Activated T-helper 1 cell treated with anti-CD3 and anti-CD28 coated beads, Interleukin-12 subunit alpha, Interleukin-12 subunit beta, Interleukin-2, Interleukin-4 antibody, amounts not matched to agents 30 ng/mL and 10 ng/mL and 1 ng/mL, durations not matched to agents 14 hours and 24 hours and 36 hours (primary cell): ENCODE measurements at regions of chr6 and their contacts with region 1.

Region 1: GRCh38 chr6:110873981-110874879 is at the start of gene AMD1:
- DNase-seq: peak; percentile 94
- H3K4me3 Mint-ChIP-seq: peak within 1 kb of the TSS; percentile 97
- H3K27ac Mint-ChIP-seq: peak within 1 kb of the TSS; percentile 98
- H3K4me1 Mint-ChIP-seq: peaks cover 37% of the 10 kb centered on the region
- H3K27me3 Mint-ChIP-seq: no peaks in the 10 kb centered on the region
- total RNA-seq, gene AMD1: 101 and 109 TPM in 2 replicates

Region 2: DNA sequence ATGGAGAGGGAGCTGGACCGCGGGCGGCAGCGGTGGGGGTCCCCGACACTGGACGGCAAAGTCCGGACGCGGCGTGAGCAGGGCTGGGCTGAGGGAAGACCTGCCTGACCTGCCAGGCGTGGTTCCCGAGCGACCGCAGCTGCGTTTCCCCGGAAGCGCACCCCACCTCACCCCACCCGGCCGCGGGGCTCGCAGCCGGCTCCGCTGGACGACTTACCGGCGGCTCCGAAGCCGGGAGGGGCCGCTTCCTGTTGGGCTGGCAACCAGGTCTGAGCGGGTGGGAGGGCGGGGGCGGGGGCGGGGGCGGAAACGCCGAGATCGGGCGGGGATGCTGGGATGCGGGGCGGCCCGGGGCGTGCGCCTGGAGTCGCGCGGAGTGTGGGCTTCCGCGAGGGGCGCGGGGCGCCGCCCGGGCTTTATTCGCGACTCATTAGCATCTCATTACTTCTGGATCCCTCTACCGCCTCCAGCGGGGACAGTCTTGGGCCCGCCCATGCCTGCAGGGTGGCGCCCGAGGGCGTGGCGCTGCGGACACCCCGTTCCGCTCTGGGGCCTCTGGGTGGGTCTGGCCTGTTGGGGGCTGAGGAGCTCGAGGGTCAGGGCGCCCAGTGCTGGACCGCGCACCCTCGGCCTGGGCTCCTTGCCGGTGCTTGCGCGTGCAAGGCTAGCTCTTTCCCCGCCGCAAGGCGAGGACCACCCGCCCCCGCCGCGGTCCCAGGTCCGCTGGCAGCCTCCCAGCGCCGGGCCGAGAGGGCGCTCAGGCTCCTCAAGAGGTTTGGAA is 1418.5 kb before region 1 on chr6 and contains the start of gene MICAL1:
- intact Hi-C with region 1: loop called (anchors 5 kb)
- DNase-seq: peak; percentile 69
- H3K4me3 Mint-ChIP-seq: peak within 1 kb of the TSS; percentile 97
- H3K27ac Mint-ChIP-seq: peak within 1 kb of the TSS; percentile 97
- H3K4me1 Mint-ChIP-seq: peaks cover 59% of the 10 kb centered on the region
- H3K27me3 Mint-ChIP-seq: no peaks in the 10 kb centered on the region
- total RNA-seq, gene MICAL1: 40.8 and 47.1 TPM in 2 replicates

Region 3: GRCh38 chr6:110682460-110682853 is 191.8 kb before region 1 on chr6:
- intact Hi-C with region 1: loop called (anchors 1 kb)
- DNase-seq: peak; percentile 63
- H3K4me3 Mint-ChIP-seq: no peak overlapping the region
- H3K27ac Mint-ChIP-seq: no peak overlapping the region
- H3K4me1 Mint-ChIP-seq: peaks cover 20% of the 10 kb centered on the region
- H3K27me3 Mint-ChIP-seq: no peaks in the 10 kb centered on the region

Region 4: GRCh38 chr6:110890288-110890687 is 16.1 kb after region 1 on chr6:
- intact Hi-C with region 1: loop called (anchors 1 kb)
- DNase-seq: no peak
- H3K4me3 Mint-ChIP-seq: no peak overlapping the region
- H3K27ac Mint-ChIP-seq: no peak overlapping the region
- H3K4me1 Mint-ChIP-seq: peaks cover 16% of the 10 kb centered on the region
- H3K27me3 Mint-ChIP-seq: no peaks in the 10 kb centered on the region

Region 5: DNA sequence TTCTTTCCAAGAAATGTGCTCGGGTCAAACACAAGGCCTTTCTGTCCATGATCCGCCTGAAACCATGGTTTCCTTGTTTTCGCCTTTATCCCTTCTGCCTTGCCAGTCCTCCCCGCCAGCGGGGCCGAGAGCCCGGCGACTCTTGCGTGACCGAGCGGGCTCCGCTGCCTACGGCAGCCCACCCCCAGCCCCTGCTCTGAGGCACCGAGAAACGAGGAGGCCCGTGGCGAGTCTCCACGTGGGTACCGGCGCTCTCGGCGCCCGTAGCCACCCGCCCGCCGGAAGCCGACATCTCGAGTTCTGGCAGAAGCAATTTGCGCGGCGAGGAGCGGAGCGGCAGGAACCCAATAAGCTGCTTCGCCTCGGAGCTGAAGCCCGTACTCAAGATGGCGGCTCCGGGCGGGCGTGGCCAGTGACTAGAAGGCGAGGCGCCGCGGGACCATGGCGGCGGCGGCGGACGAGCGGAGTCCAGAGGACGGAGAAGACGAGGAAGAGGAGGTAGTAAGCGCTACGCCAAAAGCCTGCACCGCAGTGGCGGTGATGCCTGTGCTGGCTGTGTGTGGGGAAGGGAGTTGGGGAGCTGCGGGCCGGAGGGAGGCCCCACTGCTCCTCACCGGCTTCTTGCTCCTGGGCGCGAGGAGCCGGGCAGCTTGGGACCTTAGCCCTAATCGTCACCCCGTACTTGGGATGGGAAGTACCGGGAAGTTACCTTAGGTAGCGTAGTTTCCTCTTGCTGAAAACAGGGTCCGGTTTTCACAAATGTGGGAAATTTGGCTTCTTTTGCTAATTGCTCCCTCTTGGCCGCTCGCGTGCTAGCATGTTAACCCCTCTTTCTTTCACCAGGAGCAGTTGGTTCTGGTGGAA is 84.3 kb after region 1 on chr6 and contains the start of gene GTF3C6:
- intact Hi-C with region 1: loop called (anchors 1 kb)
- DNase-seq: peak; percentile 93
- H3K4me3 Mint-ChIP-seq: peak within 1 kb of the TSS; percentile 100
- H3K27ac Mint-ChIP-seq: peak within 1 kb of the TSS; percentile 99
- H3K4me1 Mint-ChIP-seq: peaks cover 16% of the 10 kb centered on the region
- H3K27me3 Mint-ChIP-seq: peaks cover 2% of the 10 kb centered on the region
- total RNA-seq, gene GTF3C6: 137 TPM in 2 replicates

Region 6: GRCh38 chr6:112087136-112087911 is 1213.1 kb after region 1 on chr6 and contains the starts of genes FAM229B and TUBE1:
- intact Hi-C with region 1: loop called (anchors 10 kb)
- DNase-seq: peak; percentile 86
- H3K4me3 Mint-ChIP-seq: no peak within 1 kb of the TSS
- H3K27ac Mint-ChIP-seq: no peak within 1 kb of the TSS
- H3K4me1 Mint-ChIP-seq: no peaks in the 10 kb centered on the region
- H3K27me3 Mint-ChIP-seq: peaks cover 14% of the 10 kb centered on the region
- total RNA-seq, gene FAM229B: 1.1 and 2.2 TPM in 2 replicates
- total RNA-seq, gene TUBE1: 24.4 and 26.2 TPM in 2 replicates